Aorta (tissue), 5 donors: ENCODE measurements at regions of chr14 and their contacts with region 1.

Region 1: DNA sequence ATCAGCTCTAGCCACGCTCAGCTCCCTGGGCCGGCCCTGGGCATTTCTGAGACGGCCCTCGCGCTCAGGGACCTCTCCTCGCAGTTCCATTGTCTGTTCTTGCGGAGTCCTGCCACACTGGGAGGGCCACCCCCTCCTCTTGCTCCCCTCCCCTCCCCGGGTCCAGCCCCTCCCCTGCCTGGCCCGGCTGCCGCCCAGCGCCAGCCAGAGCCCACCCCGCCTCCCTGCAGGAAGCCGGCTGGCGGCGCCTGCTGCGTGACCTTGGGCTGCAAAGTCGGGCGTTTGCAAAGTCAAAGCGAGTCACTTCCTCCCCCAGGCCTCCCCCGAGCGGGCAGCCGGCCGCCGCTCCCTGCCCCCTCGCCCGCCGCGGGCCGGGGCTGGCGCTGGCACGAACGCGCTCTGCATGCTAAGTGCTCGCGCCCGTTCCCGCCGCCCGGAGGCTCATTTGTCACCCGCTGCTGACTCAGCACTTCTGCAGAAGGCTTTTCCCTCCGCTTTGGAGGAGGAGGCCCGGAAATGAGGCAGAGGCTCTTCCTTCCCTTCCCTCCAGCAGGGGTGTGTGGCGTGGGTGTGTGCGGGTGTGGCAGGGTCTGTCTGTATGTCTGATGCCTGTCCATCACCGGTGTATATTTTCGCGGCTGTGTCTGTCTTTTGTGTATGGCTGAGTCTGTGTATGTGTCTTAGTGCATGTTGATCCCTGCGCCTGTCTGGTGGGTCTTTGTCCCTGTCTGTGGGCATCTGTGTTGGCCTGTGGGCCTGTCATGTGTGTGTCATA is 72.0 kb downstream of the IRF2BPL start:
- DNase-seq: peak; percentile 96 to 97
- ATAC-seq: peak; percentile 91
- H3K4me3 ChIP-seq: no peak overlapping the region
- H3K27ac ChIP-seq: peak overlapping the region; percentile 47 to 93
- H3K4me1 ChIP-seq: no peaks in the 10 kb centered on the region
- H3K27me3 ChIP-seq: no peaks in the 10 kb centered on the region

Region 2: DNA sequence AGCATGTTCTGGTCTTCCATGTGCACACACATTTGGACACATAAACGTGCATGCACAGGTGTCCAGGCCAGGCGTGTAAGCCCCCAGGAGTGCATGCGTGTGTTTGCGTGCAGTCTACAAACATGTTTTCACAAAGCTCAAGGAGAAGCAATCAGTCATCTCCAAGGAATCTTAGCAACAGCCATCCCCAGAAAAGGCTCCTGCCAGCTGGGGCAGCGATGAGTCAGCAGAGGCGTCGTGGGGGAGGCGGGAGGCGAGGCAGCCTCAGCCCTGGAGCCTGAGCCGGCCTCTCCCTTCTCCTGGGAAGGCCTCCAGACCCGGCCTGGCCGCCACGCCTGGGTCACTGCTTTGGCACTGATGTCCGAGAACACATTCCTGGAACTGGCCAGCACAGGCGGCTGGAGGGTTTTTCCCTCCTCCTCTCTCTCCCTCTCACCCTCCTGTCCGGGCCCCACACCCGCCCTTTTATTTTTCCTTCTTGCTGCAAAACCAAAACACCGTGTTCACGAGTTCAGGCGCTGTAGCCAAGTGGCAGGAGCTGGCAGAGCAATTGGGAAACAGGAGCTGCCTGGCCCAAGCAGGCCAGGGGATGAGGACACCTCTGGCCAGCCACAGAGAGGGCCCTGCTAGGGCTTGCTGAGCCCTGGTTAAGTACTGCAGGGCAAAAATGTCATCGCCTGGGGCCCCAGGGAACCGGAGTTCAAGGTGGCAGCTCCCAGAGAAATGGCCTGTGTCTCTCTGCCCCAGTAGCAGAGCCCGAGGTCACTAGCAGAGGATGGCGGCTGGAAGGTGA is 37.6 kb before region 1 on chr14:
- intact Hi-C with region 1: loop called (anchors 2 to 5 kb)
- DNase-seq: peak; percentile 98
- ATAC-seq: peak; percentile 96
- H3K4me3 ChIP-seq: no peak overlapping the region
- H3K27ac ChIP-seq: peak overlapping the region; percentile 10 to 97
- H3K4me1 ChIP-seq: peaks cover 1 to 8% of the 10 kb centered on the region in 2 donors
- H3K27me3 ChIP-seq: no peaks in the 10 kb centered on the region

Region 3: GRCh38 chr14:77007975-77008421 is 51.5 kb after region 1 on chr14:
- intact Hi-C with region 1: loop called (anchors 2 to 5 kb)
- DNase-seq: peak; percentile 85 to 86
- ATAC-seq: peak; percentile 85
- H3K4me3 ChIP-seq: no peak overlapping the region
- H3K27ac ChIP-seq: peak overlapping the region; percentile 29 to 68
- H3K4me1 ChIP-seq: no peaks in the 10 kb centered on the region
- H3K27me3 ChIP-seq: no peaks in the 10 kb centered on the region

Region 4: GRCh38 chr14:77040059-77040740 is 83.7 kb after region 1 on chr14:
- intact Hi-C with region 1: loop called in 1 of 2 experiments (anchors 5 kb)
- DNase-seq: peak; percentile 100
- ATAC-seq: peak; percentile 90
- H3K4me3 ChIP-seq: peak overlapping the region in 1 of 2 donors; percentile 32
- H3K27ac ChIP-seq: peak overlapping the region; percentile 38 to 94
- H3K4me1 ChIP-seq: peaks cover 8 to 11% of the 10 kb centered on the region in 2 donors
- H3K27me3 ChIP-seq: no peaks in the 10 kb centered on the region